ENCODE measurements at regions of chr2 and their contacts with region 1.

Region 1: GRCh38 chr2:163132850-163133249 is 294.3 kb upstream of the KCNH7 start:
- DNase-seq: no peak
- H3K4me3 ChIP-seq: no peak overlapping the region
- H3K27ac ChIP-seq: no peak overlapping the region
- H3K4me1 ChIP-seq: no peaks in the 10 kb centered on the region
- H3K27me3 ChIP-seq: no peaks in the 10 kb centered on the region
- CTCF ChIP-seq: peak; percentile 48 to 62

Region 2: DNA sequence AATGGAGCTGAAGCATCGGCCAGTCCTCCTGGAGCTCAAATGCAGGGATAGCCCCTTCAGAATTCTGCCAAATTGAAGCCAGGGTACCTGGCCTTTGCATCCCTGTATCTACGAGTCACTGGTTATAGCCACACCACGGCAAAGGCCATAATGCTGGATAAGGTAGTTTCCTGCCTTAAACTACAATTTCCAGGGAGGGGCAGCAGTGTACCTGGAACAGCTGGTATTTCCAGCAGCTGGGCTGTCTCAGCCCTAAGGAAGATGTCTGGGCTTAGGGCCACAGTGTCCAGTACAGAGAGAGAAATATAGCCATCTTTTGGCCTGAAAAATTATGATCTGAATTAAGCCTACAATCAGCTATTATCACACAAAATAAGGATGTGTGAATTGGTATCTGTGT is 608.7 kb before region 1 on chr2:
- CTCF ChIA-PET with region 1: no interaction called
- dilution Hi-C with region 1: no loop called
- in situ Hi-C with region 1: no loop called
- intact Hi-C with region 1: loop called (anchors 5 kb)
- DNase-seq: no peak
- H3K4me3 ChIP-seq: no peak overlapping the region
- H3K27ac ChIP-seq: no peak overlapping the region
- H3K4me1 ChIP-seq: no peaks in the 10 kb centered on the region
- H3K27me3 ChIP-seq: no peaks in the 10 kb centered on the region
- CTCF ChIP-seq: peak in 1 of 2 donors; percentile 11

Region 3: GRCh38 chr2:162890690-162891311 is 242.0 kb before region 1 on chr2:
- CTCF ChIA-PET with region 1: no interaction called
- dilution Hi-C with region 1: loop called (anchors 25 kb)
- in situ Hi-C with region 1: loop called (anchors 10 to 25 kb)
- intact Hi-C with region 1: loop called (anchors 1 kb)
- DNase-seq: peak; percentile 57
- H3K4me3 ChIP-seq: peak overlapping the region in 1 of 3 experiments; percentile 25
- H3K27ac ChIP-seq: no peak overlapping the region
- H3K4me1 ChIP-seq: no peaks in the 10 kb centered on the region
- H3K27me3 ChIP-seq: no peaks in the 10 kb centered on the region
- CTCF ChIP-seq: peak; percentile 87 to 91

Measured in mammary epithelial cell (primary cell).